Astrocyte of the cerebellum (primary cell): ENCODE measurements at regions of chr16 and their contacts with region 1.

Region 1: GRCh38 chr16:86590501-86591144 is 12.3 kb downstream of the FOXL1 start:
- DNase-seq: peak; percentile 89
- H3K4me3 ChIP-seq: no peak overlapping the region
- CTCF ChIP-seq: no peak

Region 2: DNA sequence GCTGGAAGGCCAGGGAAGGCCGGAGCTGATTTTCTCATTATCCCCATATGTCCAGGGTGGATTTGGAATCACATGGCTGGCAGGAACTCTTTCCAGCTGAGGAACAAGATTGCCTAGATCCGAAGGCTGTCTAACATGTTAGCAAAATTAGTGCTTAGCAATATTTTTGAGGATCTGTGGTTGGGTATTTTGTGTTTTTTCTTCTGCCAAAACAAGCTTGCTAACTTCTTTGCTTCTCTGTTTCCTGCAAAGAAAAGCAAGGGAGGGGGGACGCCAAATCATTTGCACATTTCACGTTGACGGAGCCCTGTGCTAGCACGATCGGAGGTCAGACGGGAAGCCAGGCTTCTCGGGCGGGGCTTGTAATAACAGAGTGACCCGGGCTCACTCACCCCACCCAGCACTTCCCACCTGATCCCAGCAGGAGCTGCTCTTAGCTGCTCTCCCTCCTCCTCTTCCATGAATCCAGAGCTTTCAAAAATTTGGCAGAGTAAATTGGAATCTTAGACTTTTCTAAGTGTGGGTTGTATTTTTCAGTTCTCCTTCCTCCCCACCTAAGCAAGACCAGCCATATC is 113.6 kb before region 1 on chr16:
- in situ Hi-C with region 1: no loop called
- DNase-seq: no peak
- H3K4me3 ChIP-seq: no peak overlapping the region
- CTCF ChIP-seq: no peak

Region 3: DNA sequence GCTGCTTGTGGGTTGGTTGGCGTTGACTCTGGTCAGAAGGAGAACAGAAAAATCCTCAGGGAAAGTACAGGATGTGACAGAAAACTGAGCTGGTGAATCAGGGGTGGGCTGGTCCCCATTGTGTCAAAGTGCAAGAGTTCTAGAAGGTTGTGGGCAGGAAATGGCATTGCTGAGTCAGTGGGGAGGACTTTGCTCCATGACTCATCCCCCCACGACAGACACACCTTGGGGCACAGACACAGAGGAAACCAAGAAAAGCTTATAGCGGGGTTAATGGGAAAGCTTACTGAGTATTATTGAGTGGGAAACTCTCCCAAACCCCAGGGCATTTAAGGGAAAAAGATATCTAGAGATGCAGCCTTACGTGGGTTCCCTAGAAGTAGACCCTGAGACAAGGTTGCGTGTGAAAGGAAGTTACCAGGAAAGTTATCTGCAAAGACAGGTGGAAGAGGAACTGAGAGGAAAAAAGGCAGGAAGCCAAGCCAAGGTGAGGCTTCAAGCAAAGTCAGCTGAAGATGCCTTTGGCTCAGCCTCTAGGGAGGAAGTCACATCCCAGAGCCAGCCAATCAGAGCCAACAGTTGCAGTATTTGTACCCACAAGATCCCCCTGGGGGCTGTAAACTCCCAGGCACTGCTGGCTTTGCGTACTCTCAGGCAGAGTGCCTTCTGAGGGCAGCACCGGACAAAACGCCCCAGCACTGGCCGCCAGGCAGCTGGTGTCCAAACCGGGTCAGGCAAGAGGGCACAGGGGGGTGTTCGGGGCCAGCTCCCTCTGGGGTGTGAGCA is 74.1 kb after region 1 on chr16:
- in situ Hi-C with region 1: loop called (anchors 5 kb)
- DNase-seq: peak; percentile 60
- H3K4me3 ChIP-seq: no peak overlapping the region
- CTCF ChIP-seq: no peak